Gastrocnemius medialis (tissue), 4 donors: ENCODE measurements at regions of chr1 and their contacts with region 1.

Region 1: GRCh38 chr1:116377541-116378529 is 4.8 kb downstream of the ATP1A1 start:
- DNase-seq: peak; percentile 77 to 88
- ATAC-seq: peak; percentile 64 to 70
- H3K4me3 ChIP-seq: peak overlapping the region; percentile 8 to 84 (median 26)
- H3K27ac ChIP-seq: peak overlapping the region; percentile 94 to 98 (median 96)
- H3K4me1 ChIP-seq: peaks cover 69 to 85% of the 10 kb centered on the region in 2 donors
- H3K27me3 ChIP-seq: no peaks in the 10 kb centered on the region
- CTCF ChIP-seq: no peak
- POLR2A ChIP-seq: peak; percentile 74 to 75

Region 2: GRCh38 chr1:116418091-116418830 is 40.4 kb after region 1 on chr1:
- in situ Hi-C with region 1: no loop called
- intact Hi-C with region 1: loop called (anchors 5 kb)
- DNase-seq: peak; percentile 57 to 69
- ATAC-seq: peak; percentile 71 to 93
- H3K4me3 ChIP-seq: peak overlapping the region; percentile 75 to 87 (median 81)
- H3K27ac ChIP-seq: peak overlapping the region; percentile 61 to 81 (median 78)
- H3K4me1 ChIP-seq: peaks cover 19 to 31% of the 10 kb centered on the region in 2 donors
- H3K27me3 ChIP-seq: no peaks in the 10 kb centered on the region
- CTCF ChIP-seq: peak in 2 of 5 experiments; percentile 14 to 40
- POLR2A ChIP-seq: peak; percentile 48 to 62

Region 3: DNA sequence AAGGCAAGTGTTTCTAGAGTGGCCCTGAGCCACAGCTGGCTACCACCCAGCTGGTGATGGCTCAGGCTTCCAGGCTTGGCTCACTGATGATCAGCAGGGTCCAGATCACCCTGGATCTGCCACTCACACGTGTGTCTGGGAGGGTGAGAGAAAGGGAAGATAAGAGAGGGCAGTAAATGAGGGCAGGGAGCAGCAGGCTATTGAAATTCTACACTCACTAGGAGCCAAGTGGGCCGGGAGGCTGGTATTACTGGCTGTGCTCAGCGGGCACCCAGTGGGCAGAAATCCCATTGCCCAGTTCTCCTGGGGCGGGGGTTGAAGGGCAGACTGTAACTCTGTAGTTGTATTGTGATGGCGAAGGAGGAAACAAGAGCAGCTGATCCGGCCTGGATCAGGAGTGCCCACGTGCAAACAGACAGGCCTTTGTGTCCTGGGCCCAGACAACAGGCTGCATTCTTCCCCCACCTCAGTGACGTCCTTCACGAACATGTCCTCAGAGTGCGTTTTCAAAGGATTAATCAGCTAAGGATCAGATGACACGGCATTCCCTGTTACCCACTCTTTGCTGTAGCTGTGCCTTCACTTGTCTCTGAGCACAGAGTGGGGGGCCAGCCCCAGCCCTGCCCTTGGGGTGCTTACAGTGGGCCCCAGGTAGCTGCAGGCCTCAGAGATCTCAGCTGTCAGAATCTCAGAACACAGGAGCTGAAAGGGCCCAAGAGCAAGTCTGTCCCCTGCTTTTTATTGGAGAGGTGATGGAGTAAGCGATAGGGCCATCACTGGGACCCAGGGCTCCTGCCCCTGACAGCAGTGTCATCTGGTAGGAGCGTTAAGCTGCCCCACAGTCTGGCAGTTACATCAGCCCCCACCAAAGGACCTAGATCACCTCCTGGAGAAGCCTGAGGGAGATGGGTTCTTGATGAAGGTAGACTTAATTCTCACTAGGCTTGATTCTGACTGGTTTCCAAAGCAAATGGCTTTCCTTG is 55.7 kb after region 1 on chr1:
- in situ Hi-C with region 1: no loop called
- intact Hi-C with region 1: loop called (anchors 1 kb)
- DNase-seq: peak; percentile 82 to 86
- ATAC-seq: peak; percentile 88 to 89
- H3K4me3 ChIP-seq: peak overlapping the region in 1 of 4 donors; percentile 7
- H3K27ac ChIP-seq: peak overlapping the region; percentile 74 to 92 (median 88)
- H3K4me1 ChIP-seq: peaks cover 11% of the 10 kb centered on the region in 2 donors
- H3K27me3 ChIP-seq: no peaks in the 10 kb centered on the region
- CTCF ChIP-seq: no peak
- POLR2A ChIP-seq: peak; percentile 29 to 52